ENCODE measurements at regions of chr15 and their contacts with region 1.

Region 1: GRCh38 chr15:41989259-41989933 is 17.0 kb upstream of the EHD4 start:
- DNase-seq: peak; percentile 90
- ATAC-seq: peak; percentile 99
- H3K4me3 Mint-ChIP-seq: no peak overlapping the region
- H3K27ac Mint-ChIP-seq: no peak overlapping the region
- H3K4me1 Mint-ChIP-seq: no peaks in the 10 kb centered on the region
- H3K27me3 Mint-ChIP-seq: peaks cover 3% of the 10 kb centered on the region
- CTCF ChIP-seq: peak; percentile 96

Region 2: DNA sequence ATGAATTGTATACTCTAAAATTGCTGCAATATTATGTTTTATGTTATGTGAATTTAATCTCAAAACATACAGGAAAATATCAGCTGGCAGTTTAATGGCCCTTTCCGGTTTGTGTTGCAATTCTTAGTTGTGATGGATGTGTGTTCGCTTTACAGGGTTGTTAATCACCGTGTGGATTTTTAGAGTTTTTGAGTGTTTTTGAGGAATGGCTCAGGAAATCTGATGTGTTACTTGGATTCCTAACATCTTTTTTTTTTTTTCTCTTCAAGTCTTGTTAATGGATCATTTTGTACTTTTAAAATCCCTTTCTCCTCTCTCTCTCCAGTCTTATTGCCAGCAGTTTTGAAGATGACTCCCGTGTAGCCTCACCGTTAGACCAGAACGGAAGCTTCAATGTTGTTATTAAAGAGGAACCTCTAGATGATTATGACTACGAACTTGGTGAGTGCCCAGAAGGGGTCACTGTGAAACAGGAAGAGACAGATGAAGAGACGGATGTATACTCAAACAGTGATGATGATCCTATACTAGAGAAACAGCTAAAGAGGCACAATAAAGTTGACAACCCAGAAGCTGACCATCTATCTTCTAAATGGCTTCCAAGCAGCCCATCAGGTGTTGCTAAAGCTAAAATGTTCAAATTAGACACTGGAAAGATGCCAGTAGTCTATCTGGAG is 293.5 kb before region 1 on chr15:
- CTCF ChIA-PET with region 1: no interaction called
- POLR2A ChIA-PET with region 1: no interaction called
- intact Hi-C with region 1: no loop called
- DNase-seq: peak; percentile 75
- ATAC-seq: peak; percentile 96
- H3K4me3 Mint-ChIP-seq: peak overlapping the region; percentile 7
- H3K27ac Mint-ChIP-seq: peak overlapping the region; percentile 82
- H3K4me1 Mint-ChIP-seq: peaks cover 47% of the 10 kb centered on the region
- H3K27me3 Mint-ChIP-seq: no peaks in the 10 kb centered on the region
- CTCF ChIP-seq: peak; percentile 49

Region 3: DNA sequence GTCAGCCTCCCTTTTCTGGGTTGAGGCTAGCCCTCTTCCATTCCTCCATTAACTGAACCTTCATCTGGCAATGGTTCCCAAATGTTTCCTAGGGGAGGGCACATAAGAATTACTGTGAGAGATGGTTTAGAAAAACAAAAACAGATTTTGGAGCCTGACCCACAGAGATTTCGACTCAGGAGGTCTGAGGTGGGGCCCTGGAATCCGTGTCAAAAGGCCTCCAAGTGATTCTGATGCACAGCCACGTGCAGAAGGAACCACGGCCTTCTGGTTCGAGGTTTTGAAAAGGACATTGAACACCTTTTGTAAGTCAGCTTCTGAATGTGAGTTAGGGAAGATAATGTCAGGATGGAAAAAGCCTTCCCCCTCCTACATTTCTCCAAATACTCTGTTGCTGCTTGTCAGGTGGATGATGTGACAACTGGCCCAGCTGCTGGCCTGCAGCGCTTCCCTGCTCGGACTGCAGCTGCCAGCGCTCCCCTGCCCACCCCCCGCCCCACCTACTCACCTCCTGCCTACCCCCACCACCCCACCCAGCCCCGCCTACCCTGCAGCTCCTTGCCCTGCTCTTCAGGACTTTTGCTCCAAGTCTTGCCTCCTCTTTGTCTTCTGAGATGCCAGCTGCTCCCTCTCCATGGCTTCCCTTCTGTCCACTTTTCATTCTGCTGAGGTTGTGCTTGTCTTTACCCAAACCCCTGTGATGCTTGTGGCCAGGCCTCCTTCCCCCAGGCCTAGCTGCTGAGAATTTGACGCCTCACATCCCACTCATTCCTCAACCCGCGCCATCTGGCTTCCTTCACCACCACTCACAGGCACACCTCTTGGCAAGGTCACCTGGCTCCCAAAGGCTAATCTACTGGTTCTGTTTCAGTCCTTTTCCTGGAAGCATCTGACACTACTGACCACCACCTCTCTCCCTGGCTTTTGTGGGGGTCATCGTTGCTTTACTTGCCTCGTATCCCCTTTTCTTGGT is 23.7 kb before region 1 on chr15:
- CTCF ChIA-PET with region 1: no interaction called
- POLR2A ChIA-PET with region 1: no interaction called
- intact Hi-C with region 1: no loop called
- DNase-seq: peak; percentile 18
- ATAC-seq: no peak
- H3K4me3 Mint-ChIP-seq: no peak overlapping the region
- H3K27ac Mint-ChIP-seq: no peak overlapping the region
- H3K4me1 Mint-ChIP-seq: peaks cover 54% of the 10 kb centered on the region
- H3K27me3 Mint-ChIP-seq: no peaks in the 10 kb centered on the region
- CTCF ChIP-seq: no peak

Region 4: GRCh38 chr15:41999290-42000285 is 10.2 kb after region 1 on chr15:
- CTCF ChIA-PET with region 1: interaction called, 20 read pairs
- POLR2A ChIA-PET with region 1: no interaction called
- intact Hi-C with region 1: no loop called
- DNase-seq: peak; percentile 22
- ATAC-seq: peak; percentile 65
- H3K4me3 Mint-ChIP-seq: no peak overlapping the region
- H3K27ac Mint-ChIP-seq: no peak overlapping the region
- H3K4me1 Mint-ChIP-seq: peaks cover 5% of the 10 kb centered on the region
- H3K27me3 Mint-ChIP-seq: no peaks in the 10 kb centered on the region
- CTCF ChIP-seq: no peak

Region 5: DNA sequence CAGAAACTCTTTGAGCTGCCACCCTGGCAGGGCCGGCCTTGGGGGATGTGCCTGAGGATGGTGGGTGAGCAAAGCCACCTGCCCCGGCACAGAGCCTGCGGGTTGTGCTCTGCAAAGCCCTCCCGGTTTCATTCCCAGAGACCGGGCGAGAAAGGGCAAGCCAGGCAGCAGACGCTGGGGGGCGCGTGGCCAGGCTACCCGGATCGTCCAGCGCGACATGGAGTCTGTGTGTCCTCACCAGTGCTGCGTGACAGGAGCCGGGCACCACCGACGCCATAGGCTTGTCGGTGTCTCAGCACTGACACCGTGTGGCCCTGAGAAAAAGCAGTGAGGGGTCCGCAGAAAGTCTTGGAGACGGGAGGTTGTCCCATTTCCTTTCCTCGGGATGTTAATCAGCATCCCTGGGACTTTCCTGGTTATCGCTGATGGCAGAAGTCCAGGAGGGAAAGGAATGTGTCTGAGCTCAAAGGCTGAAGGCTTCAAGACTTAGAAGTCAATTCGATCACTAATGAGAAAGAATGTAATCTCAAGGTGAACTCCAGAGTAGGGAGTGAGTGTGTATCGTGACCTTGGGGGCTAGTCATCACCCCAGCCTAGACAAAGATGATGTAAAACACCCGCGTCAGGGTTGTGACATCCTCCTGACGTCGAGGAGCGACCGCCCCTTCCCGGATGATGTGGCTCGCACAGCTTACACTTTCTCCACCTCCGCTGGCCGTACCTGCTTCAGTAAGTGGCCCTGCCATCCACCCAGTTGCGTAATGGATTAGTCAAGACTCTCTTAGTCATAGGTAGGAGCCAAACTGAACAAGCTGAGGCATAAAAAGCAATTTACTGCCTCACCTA is 67.8 kb after region 1 on chr15:
- CTCF ChIA-PET with region 1: interaction called, 97 read pairs
- POLR2A ChIA-PET with region 1: interaction called, 4 read pairs
- intact Hi-C with region 1: loop called (anchors 1 kb)
- DNase-seq: peak; percentile 70
- ATAC-seq: peak; percentile 86
- H3K4me3 Mint-ChIP-seq: peak overlapping the region; percentile 20
- H3K27ac Mint-ChIP-seq: no peak overlapping the region
- H3K4me1 Mint-ChIP-seq: peaks cover 7% of the 10 kb centered on the region
- H3K27me3 Mint-ChIP-seq: peaks cover 26% of the 10 kb centered on the region
- CTCF ChIP-seq: peak; percentile 63

Region 6: DNA sequence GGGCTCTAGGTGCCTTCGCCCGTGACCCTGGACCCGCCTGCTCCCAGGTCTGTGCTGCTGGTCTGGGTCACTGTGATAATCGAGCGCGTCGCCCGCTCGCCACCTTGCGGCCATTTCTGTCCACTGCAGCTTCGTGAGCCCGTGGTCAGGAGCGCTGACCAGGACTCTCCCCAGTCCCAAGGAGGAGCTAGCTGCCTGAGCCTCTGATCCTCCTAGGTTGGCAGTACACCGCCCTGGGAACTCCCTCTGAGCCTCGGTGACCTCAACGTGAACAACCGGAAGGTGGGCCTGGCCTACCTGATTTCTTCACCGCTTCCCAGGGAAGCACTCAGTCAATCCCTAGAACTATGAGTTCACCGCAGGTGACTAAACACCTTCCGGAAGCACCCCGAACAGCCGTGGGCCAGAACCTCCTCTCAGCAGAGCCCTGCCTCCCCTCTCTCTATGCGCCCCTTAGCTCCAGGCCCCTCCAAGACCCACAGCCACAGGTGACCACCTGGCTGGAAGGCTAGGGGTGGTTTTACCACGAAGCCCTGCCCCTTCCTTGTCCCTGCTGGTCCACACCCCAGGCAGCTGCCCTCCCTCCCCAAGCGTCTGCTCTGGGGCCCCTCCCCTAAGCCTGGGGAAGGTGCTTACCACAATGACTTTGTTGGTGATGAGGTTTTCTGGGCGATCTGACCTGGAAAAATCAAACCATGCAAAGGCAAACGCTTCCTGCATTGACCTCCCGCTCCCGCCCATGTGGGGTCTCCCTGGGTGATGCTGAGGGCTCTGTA is 95.3 kb after region 1 on chr15:
- CTCF ChIA-PET with region 1: interaction called, 59 read pairs
- POLR2A ChIA-PET with region 1: interaction called, 3 read pairs
- intact Hi-C with region 1: no loop called
- DNase-seq: peak; percentile 59
- ATAC-seq: peak; percentile 90
- H3K4me3 Mint-ChIP-seq: no peak overlapping the region
- H3K27ac Mint-ChIP-seq: no peak overlapping the region
- H3K4me1 Mint-ChIP-seq: peaks cover 3% of the 10 kb centered on the region
- H3K27me3 Mint-ChIP-seq: peaks cover 7% of the 10 kb centered on the region
- CTCF ChIP-seq: peak; percentile 95

Region 7: DNA sequence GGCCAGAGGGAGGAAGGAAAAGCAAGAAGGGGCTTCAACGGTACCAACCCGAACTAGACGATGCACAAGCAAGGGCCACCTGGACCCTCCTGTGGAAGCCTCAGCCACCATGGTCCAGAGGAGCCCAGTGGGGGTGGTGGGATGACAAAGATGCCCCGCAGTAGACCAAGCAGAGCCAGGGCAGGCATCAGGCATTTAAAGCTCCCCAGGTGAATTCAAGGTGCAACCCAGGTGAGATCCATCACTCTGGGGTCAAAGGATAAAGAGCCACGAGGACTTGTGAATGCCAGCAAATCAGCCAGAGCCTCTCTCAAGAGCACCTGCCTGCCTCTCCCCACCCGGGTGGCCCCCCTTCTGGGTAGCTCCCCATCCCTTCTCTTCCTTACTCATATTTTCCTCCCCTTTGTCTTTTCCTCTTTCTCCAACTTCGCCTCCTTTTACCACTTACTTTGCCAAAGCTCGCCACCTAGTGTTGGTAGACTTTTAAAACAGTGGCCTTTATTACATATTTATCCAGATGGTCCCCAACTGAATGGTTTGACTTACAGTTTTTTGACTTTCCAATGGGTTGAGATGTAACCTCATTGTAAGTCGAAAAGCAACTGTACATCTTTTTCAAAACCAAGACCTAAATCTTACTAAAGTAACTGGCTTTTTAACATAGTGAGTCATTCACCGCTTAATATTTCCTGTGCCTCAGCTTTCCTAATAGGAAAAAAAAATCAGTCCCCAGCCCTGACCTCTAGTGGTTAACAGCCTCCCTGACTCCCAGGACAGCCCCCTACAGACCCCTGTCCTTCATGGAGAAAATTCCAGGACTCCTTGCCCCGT is 148.2 kb after region 1 on chr15:
- CTCF ChIA-PET with region 1: interaction called, 20 read pairs
- POLR2A ChIA-PET with region 1: no interaction called
- intact Hi-C with region 1: loop called (anchors 10 kb)
- DNase-seq: peak; percentile 41
- ATAC-seq: no peak
- H3K4me3 Mint-ChIP-seq: no peak overlapping the region
- H3K27ac Mint-ChIP-seq: no peak overlapping the region
- H3K4me1 Mint-ChIP-seq: no peaks in the 10 kb centered on the region
- H3K27me3 Mint-ChIP-seq: no peaks in the 10 kb centered on the region
- CTCF ChIP-seq: peak; percentile 73